ENCODE measurements at regions of chr9 and their contacts with region 1.

Region 1: GRCh38 chr9:116860509-116861120 is 173.5 kb downstream of the TRIM32 start:
- DNase-seq: peak; percentile 19 to 55
- ATAC-seq: peak; percentile 69 to 76
- H3K4me3 ChIP-seq: no peak overlapping the region
- H3K27ac ChIP-seq: no peak overlapping the region
- H3K4me1 ChIP-seq: no peaks in the 10 kb centered on the region
- H3K27me3 ChIP-seq: no peaks in the 10 kb centered on the region
- CTCF ChIP-seq: peak; percentile 30 to 67 (median 64)
- POLR2A ChIP-seq: no peak

Region 2: DNA sequence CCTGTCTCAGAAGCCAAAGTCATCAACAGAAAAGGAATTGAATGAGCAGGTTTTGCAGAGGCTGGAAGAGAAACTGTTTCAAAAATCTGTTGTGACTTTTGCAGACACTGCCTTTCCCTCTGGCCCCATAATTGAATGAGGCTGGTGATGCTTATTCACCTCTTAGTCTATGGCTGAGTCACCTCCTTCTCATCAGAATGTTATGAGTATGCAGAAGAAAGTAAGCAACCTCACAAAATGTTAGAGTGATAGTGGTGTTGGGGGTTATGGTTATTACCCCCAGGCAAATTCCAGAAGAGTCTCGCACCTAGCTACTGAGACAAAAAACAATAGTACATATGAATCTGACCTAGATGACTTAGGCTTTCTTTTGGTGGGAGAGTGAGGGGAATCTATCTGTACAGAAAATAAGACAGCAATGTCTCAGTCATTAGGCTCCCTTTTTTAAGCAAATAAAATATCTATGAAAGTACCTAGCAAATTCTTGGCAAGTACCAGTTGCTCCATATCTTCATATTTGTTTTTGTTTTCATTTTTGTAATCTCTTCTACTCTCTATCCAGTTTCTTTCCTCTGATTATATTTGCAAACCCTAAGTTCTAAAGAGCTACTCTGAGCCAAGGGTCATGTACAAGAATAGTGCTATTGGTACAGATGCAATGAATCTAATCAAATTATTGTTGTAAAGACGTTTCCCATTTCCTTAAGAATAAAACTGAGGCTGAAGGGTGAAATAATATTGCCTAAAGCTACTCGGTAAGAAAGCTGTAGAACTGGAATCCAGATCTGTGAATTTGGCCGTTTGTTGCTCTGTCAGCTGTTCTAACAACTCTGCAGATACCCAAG is 1244.6 kb before region 1 on chr9:
- in situ Hi-C with region 1: loop called in 1 of 4 experiments (anchors 25 kb)
- intact Hi-C with region 1: no loop called
- DNase-seq: no peak
- ATAC-seq: no peak
- H3K4me3 ChIP-seq: no peak overlapping the region
- H3K27ac ChIP-seq: no peak overlapping the region
- H3K4me1 ChIP-seq: no peaks in the 10 kb centered on the region
- H3K27me3 ChIP-seq: no peaks in the 10 kb centered on the region
- CTCF ChIP-seq: no peak
- POLR2A ChIP-seq: no peak

Region 3: GRCh38 chr9:116737152-116737546 is 123.5 kb before region 1 on chr9:
- in situ Hi-C with region 1: loop called in 3 of 4 experiments (anchors 5 to 10 kb)
- intact Hi-C with region 1: no loop called
- DNase-seq: peak; percentile 36 to 55
- ATAC-seq: peak; percentile 30 to 69
- H3K4me3 ChIP-seq: peak overlapping the region in 3 of 4 donors; percentile 7 to 37 (median 28)
- H3K27ac ChIP-seq: no peak overlapping the region
- H3K4me1 ChIP-seq: no peaks in the 10 kb centered on the region
- H3K27me3 ChIP-seq: no peaks in the 10 kb centered on the region
- CTCF ChIP-seq: peak; percentile 64 to 88 (median 71)
- POLR2A ChIP-seq: no peak

Region 4: DNA sequence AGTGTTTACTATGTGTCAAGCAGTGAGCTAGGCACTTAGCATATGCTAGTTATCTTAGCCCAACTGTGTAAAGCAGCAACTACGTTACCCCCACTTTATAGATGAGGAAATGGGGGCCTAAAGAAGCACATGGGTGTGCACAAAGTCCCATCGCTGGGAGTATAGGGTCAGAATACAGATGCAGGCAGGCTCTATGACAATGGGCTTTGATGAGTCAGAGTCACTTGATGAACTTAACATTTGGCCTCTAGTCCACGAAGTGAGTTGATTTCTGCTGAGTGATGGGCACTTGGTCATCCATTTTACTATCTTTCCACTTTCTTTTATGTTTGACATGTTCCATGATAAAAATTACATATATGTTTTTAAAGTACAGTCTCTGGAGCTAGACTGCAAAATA is 30.8 kb after region 1 on chr9:
- in situ Hi-C with region 1: no loop called
- intact Hi-C with region 1: no loop called
- DNase-seq: no peak
- ATAC-seq: no peak
- H3K4me3 ChIP-seq: no peak overlapping the region
- H3K27ac ChIP-seq: no peak overlapping the region
- H3K4me1 ChIP-seq: no peaks in the 10 kb centered on the region
- H3K27me3 ChIP-seq: no peaks in the 10 kb centered on the region
- CTCF ChIP-seq: no peak
- POLR2A ChIP-seq: no peak

Measured in gastrocnemius medialis (tissue), 4 donors.